Uterus (tissue), 4 donors: ENCODE measurements at regions of chr7 and their contacts with region 1.

Region 1: DNA sequence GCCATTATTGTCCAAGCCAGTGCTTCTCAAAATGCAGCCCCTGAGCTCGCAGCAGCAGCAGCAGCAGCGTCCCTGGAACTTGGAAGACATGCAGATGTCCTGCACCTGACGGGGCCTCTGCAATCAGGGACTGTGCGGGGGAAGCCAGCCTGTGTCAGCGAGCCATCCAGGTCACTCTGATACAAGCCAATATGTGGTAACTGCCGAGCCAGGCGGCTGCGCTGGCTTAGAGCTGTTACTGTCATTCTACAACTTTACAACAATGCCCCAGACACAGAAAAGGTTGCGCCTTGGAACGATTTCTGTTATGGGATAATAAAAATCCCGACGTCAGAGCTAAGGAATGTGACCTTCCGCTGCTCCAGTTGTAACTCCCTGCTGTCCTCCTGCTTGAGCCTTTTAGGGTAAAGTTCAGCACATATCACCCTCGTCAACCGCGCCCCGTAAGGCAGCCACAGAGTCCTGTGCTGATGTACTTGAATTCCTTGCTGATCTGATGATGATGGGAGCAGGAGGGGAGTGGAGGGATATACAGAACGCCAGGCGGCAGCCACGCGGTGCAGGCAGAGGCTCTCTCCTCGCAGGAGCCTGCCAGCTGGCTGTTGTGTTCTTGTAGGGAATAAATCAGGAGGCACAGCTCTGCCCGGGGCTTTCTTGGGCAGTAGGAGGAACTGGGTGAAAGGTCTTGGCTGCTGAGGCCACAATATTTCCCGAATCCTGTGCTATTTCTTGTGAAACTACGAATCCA is 20.0 kb upstream of the CRYGN start:
- DNase-seq: peak; percentile 90 to 94
- H3K4me3 ChIP-seq: peak overlapping the region; percentile 10 to 13
- H3K27ac ChIP-seq: peak overlapping the region; percentile 89 to 94
- H3K4me1 ChIP-seq: peaks cover 3 to 11% of the 10 kb centered on the region in 2 donors
- H3K27me3 ChIP-seq: no peaks in the 10 kb centered on the region
- CTCF ChIP-seq: peak; percentile 25 to 63 (median 48)
- POLR2A ChIP-seq: peak; percentile 11 to 46

Region 2: DNA sequence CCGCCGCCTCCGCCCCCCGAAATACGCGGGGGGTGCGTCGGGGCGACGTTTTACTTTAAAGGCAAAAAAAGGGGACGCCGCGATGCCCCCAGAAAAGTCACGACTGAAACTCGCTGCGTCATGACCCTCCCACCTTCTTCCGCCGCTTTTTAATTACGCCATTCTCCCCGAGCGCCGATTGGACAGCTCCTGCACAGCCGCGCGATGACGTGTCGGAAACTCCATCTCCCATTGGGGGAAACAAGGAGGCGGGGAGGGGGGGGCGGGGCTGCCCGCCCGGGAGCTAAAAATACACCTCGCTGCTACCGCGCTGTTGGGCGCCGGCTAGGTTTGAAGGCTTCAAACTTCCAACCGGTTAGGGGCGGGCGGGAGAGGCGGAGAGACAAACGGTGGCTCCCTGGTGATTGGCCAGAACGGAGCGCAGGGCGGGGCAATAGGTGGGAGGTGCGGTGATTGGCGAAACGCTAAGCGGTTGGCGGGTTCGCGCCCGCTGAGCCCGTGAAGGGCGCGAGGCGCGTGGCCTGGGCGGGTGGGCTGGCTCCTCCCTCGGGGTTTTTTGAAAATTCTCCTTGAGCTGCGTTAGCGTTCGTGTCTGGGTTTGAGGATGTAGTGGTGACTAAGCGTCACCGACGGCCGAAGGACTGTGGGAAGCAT is 60.0 kb after region 1 on chr7 and contains the start of gene RHEB:
- intact Hi-C with region 1: loop called (anchors 5 kb)
- DNase-seq: peak; percentile 99
- H3K4me3 ChIP-seq: peak within 1 kb of the TSS; percentile 85 to 98
- H3K27ac ChIP-seq: peak within 1 kb of the TSS; percentile 96 to 100
- H3K4me1 ChIP-seq: no peaks in the 10 kb centered on the region
- H3K27me3 ChIP-seq: no peaks in the 10 kb centered on the region
- CTCF ChIP-seq: peak in 1 of 4 experiments; percentile 6
- POLR2A ChIP-seq: peak in 1 of 2 donors; percentile 51
- total RNA-seq, gene RHEB: 69.2 to 135 (median 102) TPM

Region 3: GRCh38 chr7:151759591-151760042 is 299.7 kb after region 1 on chr7:
- intact Hi-C with region 1: loop called (anchors 10 kb)
- DNase-seq: peak; percentile 57 to 70
- H3K4me3 ChIP-seq: no peak overlapping the region
- H3K27ac ChIP-seq: no peak overlapping the region
- H3K4me1 ChIP-seq: no peaks in the 10 kb centered on the region
- H3K27me3 ChIP-seq: no peaks in the 10 kb centered on the region
- CTCF ChIP-seq: peak; percentile 86 to 93 (median 89)
- POLR2A ChIP-seq: no peak